ENCODE measurements at regions of chr5 and their contacts with region 1.

Region 1: DNA sequence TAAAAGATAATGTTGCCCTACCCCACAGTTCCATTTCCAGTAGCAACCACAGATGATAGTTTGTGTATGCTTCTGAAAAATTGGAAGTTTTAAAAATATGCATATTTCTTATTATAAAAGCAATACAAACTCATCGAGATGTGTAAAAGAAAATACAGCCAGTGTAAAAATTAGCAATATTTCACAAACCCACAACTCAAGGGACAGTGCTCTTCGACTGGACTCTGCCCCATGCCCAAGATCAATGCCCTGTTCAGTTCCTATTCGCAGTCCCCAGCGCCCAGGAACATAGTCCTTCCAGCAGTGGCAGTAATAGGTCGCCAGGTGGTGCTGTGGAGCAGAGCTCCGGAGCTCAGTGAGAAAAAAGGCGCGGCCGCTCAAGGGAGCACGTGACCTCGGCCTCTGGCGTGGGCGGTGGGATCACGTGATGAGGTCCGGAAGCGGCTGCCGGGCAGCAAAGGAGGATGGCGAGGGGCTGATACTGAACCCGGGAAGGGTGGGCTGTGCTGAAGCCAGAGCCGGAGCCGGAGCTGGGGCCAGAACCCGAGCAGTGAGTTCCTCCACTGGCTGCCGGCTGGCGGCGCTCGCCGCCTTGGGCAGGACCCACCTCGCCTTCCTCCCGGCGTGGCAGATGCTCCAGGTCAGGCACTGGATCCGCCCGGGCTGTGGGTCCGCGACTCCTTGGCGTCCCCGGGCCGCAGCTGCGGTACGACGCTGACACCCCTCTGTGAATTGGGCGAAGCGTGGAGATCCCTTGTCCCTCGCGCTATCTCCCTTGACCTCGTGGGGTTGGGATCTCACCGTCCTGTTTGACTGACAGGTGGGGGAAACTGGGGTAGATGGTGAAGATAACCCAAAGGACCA is at the start of gene SLC36A1:
- DNase-seq: peak; percentile 98
- total RNA-seq, gene SLC36A1: 3.3 TPM

Region 2: GRCh38 chr5:151499501-151500035 is 52.2 kb after region 1 on chr5:
- intact Hi-C with region 1: loop called (anchors 1 kb)
- DNase-seq: no peak

Region 3: GRCh38 chr5:151651997-151652645 is 204.7 kb after region 1 on chr5:
- intact Hi-C with region 1: loop called (anchors 1 kb)
- DNase-seq: peak; percentile 86

Region 4: GRCh38 chr5:151740336-151740942 is 293.0 kb after region 1 on chr5:
- intact Hi-C with region 1: loop called (anchors 2 kb)
- DNase-seq: no peak

Measured in cardiac septum (tissue), 1 donor.